Dendritic cell treated with granulocyte-macrophage colony-stimulating factor and Interleukin-4, amounts not matched to agents 40 ng/mL and 50 ng/mL, for 4 days (primary cell): ENCODE measurements at regions of chr19 and their contacts with region 1.

Region 1: DNA sequence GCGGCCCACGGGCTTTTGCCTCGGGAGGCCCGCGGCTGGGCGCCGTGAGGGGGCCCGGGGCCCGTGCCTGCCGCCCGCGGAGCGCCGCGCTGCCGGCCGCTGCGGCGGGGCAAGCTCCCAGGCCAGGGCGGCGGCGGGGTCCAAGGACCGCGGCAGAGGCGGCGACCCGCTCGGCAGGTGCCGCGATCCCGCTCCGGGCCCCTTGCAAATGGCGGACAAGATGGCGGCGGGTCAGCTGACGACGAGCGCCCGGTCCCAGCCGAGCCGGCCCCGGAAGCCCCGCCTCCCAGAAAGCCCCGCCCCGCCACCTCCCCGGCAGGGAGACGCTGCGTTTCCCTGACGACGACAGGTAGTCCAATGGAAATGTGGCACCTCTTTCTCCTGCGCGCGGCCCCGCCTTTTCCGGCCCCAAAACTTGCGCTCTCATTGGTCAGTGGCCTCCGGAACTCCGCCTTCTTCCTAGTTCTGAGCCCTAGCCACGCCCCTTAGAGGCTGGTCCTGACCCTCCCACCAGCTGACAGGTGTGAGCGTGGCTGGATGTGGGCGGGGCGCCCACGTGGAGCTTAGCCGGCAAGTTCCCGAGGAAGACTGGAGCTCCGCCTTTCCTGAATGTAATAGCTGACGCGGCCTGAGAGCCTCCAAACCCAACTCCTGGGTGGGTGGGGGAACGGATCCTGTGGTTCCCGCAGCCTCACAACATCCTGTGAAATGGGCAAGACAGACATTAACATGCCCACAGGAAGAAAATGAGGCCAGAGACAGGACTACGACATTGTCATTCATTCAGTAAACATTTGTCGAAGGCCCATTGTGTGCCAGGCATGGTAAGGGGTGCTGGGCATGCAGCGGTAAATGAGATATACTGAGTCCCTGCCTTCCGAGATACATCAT is at the start of gene AP3D1:
- H3K4me3 Mint-ChIP-seq: peak within 1 kb of the TSS; percentile 84
- H3K27ac Mint-ChIP-seq: peak within 1 kb of the TSS; percentile 87
- H3K4me1 Mint-ChIP-seq: peaks cover 61% of the 10 kb centered on the region
- H3K27me3 Mint-ChIP-seq: no peaks in the 10 kb centered on the region

Region 2: GRCh38 chr19:2016041-2016807 is 135.4 kb before region 1 on chr19:
- intact Hi-C with region 1: loop called (anchors 5 kb)
- H3K4me3 Mint-ChIP-seq: peak overlapping the region; percentile 61
- H3K27ac Mint-ChIP-seq: peak overlapping the region; percentile 47
- H3K4me1 Mint-ChIP-seq: peaks cover 46% of the 10 kb centered on the region
- H3K27me3 Mint-ChIP-seq: no peaks in the 10 kb centered on the region

Region 3: GRCh38 chr19:2236314-2237050 is 84.9 kb after region 1 on chr19 and contains the starts of genes PLEKHJ1 and SF3A2:
- intact Hi-C with region 1: loop called (anchors 1 kb)
- H3K4me3 Mint-ChIP-seq: peak within 1 kb of the TSS; percentile 94
- H3K27ac Mint-ChIP-seq: peak within 1 kb of the TSS; percentile 98
- H3K4me1 Mint-ChIP-seq: peaks cover 78% of the 10 kb centered on the region
- H3K27me3 Mint-ChIP-seq: no peaks in the 10 kb centered on the region

Region 4: GRCh38 chr19:2273356-2274184 is 122.0 kb after region 1 on chr19:
- intact Hi-C with region 1: loop called (anchors 5 kb)
- H3K4me3 Mint-ChIP-seq: peak overlapping the region; percentile 90
- H3K27ac Mint-ChIP-seq: peak overlapping the region; percentile 98
- H3K4me1 Mint-ChIP-seq: peaks cover 61% of the 10 kb centered on the region
- H3K27me3 Mint-ChIP-seq: no peaks in the 10 kb centered on the region

Region 5: DNA sequence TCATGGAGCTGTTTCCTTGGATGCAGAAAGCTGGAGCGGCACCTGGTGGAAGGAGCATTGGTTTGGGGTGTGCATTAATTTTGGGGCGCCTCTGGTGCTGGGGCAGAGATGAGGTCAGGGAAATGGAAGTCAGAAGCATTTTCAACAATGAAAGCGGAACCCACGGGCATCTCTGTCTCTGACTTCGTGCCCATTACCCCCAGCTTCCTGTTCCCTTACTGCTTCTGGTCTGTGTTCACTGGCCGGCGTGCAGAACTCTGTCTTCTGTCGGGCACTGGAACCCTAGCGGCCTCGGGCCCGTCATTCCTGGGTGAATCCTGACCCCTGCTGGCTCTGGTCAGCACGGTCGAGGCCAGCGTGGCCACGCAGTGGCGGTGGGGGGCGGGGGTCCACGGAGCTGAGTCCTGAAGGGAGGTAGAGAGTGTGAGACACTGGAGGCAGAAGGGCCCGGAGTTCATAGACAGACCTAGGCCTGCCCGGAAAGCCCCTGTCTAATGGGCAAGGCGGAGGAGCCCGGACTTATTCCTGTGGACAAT is 164.3 kb after region 1 on chr19:
- intact Hi-C with region 1: loop called (anchors 1 kb)
- H3K4me3 Mint-ChIP-seq: peak overlapping the region; percentile 55
- H3K27ac Mint-ChIP-seq: peak overlapping the region; percentile 59
- H3K4me1 Mint-ChIP-seq: peaks cover 26% of the 10 kb centered on the region
- H3K27me3 Mint-ChIP-seq: peaks cover 23% of the 10 kb centered on the region